ENCODE measurements at regions of chr10 and their contacts with region 1.

Region 1: GRCh38 chr10:63629363-63630084 is 108.3 kb downstream of the REEP3 start:
- DNase-seq: peak; percentile 89
- H3K4me3 Mint-ChIP-seq: peak overlapping the region; percentile 82
- H3K27ac Mint-ChIP-seq: peak overlapping the region; percentile 69
- H3K4me1 Mint-ChIP-seq: peaks cover 17% of the 10 kb centered on the region
- H3K27me3 Mint-ChIP-seq: no peaks in the 10 kb centered on the region

Region 2: GRCh38 chr10:62707810-62708209 is 921.7 kb before region 1 on chr10:
- CTCF ChIA-PET with region 1: no interaction called
- intact Hi-C with region 1: no loop called
- DNase-seq: no peak
- H3K4me3 Mint-ChIP-seq: no peak overlapping the region
- H3K27ac Mint-ChIP-seq: no peak overlapping the region
- H3K4me1 Mint-ChIP-seq: peaks cover 3% of the 10 kb centered on the region
- H3K27me3 Mint-ChIP-seq: peaks cover 2% of the 10 kb centered on the region

Region 3: GRCh38 chr10:63166742-63167258 is 462.7 kb before region 1 on chr10:
- CTCF ChIA-PET with region 1: interaction called, 77 read pairs
- intact Hi-C with region 1: loop called (anchors 1 kb)
- DNase-seq: peak; percentile 20
- H3K4me3 Mint-ChIP-seq: no peak overlapping the region
- H3K27ac Mint-ChIP-seq: no peak overlapping the region
- H3K4me1 Mint-ChIP-seq: peaks cover 30% of the 10 kb centered on the region
- H3K27me3 Mint-ChIP-seq: no peaks in the 10 kb centered on the region

Region 4: DNA sequence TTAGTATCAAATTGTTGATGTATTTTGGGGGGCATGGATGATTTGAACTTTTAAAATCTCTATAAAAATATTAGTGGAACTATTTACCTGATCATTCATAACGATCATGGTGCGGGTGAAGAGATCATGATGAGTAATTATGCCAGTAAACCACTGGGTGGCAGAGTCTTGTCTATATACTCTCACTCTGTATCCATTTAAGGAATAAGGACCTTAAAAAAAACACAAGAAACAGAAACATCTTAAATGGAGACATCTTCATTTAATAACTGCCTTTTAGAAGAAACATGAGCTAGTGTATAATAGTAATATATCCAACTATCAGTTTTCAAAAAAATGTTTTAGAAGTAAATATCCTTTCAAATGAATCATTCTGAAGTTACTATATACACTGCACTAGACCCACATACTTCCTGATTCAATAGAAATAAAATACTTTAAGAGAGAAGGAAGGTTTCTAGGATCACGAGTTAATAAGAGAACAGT is 412.4 kb before region 1 on chr10:
- CTCF ChIA-PET with region 1: interaction called, 24 read pairs
- intact Hi-C with region 1: loop called (anchors 1 kb)
- DNase-seq: no peak
- H3K4me3 Mint-ChIP-seq: no peak overlapping the region
- H3K27ac Mint-ChIP-seq: peak overlapping the region; percentile 13
- H3K4me1 Mint-ChIP-seq: peaks cover 49% of the 10 kb centered on the region
- H3K27me3 Mint-ChIP-seq: no peaks in the 10 kb centered on the region

Region 5: DNA sequence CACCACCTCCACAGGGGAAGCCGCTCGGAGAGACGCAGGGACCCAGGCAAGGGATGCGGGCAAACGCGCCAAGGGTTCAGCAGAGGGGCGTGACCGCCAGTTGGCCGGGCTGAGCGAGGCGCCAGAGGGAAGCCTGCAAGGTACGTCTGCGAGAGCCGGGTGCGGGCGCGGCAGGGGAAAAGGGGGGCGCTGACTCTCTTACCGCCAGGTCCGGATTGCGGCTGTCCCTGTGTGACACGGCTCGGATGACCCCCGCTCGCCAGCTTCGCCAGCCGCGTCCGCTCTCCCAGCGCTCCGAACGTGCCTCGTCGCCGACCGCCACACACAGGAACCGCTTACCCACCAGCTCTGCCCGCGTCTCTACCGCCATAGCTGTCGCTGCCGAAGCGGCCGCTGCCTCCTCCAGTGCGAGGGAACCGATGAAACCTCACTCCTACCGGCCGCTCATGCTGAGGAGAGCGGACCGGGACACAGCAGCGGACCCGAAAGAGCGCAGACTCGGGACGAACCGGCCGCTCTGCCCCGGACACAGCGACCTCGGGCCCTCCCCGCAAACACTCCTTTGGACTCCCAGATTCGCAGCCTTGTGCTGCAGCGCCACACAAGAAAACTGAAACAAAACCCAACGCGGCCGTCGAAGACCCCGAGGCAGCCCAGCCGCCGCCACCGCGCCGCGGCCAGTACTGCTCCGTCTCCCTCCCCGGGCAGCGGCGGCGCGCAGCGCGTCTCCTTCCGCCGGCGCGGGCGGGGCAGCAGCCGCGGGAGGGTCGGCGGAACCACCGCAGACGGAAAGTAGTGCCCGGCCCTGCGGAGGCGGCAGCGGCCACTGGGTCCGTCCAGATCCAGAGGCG is 164.0 kb before region 1 on chr10 and contains the start of gene JMJD1C:
- CTCF ChIA-PET with region 1: interaction called, 5 read pairs
- intact Hi-C with region 1: loop called (anchors 1 kb)
- DNase-seq: peak; percentile 69
- H3K4me3 Mint-ChIP-seq: peak within 1 kb of the TSS; percentile 92
- H3K27ac Mint-ChIP-seq: peak within 1 kb of the TSS; percentile 79
- H3K4me1 Mint-ChIP-seq: peaks cover 24% of the 10 kb centered on the region
- H3K27me3 Mint-ChIP-seq: no peaks in the 10 kb centered on the region
- total RNA-seq, gene JMJD1C: 54.1 to 56.6 TPM

Region 6: DNA sequence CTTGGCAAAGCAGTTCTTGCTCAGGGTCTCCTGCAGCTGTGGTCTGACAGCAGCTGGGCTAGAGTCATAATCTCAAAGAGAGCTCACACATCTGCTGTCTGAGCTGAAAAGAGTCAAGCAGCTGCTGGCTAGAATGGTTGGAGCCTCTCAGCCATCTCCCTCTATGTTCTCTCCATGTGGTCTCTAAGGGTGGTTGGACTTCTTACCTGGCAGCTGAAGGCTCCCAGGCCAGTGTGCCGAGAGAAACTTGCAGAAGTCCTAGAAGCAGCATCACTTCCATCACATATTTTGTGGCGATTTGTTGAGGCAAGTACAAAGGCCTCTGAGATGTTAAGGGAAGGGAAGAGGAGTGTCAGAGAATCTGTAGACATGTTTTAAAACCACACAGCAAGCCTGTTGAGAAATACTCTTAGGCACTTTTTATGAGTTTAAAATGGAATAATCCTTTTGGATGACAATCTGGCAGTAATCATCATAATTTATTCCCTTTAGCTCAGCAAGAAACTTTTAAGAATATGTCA is 15.1 kb before region 1 on chr10:
- CTCF ChIA-PET with region 1: interaction called, 11 read pairs
- intact Hi-C with region 1: loop called (anchors 1 kb)
- DNase-seq: no peak
- H3K4me3 Mint-ChIP-seq: no peak overlapping the region
- H3K27ac Mint-ChIP-seq: no peak overlapping the region
- H3K4me1 Mint-ChIP-seq: peaks cover 14% of the 10 kb centered on the region
- H3K27me3 Mint-ChIP-seq: no peaks in the 10 kb centered on the region

Region 7: DNA sequence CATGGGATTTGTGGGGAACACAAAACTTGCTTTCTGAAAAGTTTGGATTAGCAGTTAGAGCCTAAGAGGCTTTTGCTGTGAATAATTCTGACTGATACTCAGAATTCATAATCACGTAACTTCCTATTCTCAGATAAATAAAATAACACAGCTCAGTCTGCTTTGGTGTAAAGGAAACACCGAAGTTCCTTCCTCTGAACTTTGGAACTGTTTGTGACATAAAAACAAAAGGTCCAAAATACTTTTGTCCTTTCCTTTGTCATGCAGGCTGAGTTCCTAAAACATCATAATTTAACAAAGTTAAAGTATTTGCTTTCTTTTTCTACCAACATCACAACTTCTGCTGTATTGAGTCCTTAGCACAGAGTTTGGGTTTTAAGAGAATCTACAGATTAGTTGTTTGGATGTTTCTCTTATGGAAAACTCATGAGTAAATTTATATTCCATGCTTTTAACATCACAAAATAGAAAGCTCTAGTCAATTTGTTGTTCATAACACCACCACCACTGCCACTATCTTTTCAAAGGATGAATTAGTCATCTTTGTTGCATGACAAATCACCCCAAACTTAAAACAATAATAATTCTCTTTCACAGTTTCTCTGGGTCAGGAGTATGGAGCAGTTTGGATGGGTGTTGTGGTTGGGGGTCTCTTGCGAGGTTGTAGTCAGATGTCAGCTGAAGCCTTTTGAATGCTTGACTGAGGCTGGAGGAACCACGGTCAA is 15.1 kb after region 1 on chr10:
- CTCF ChIA-PET with region 1: no interaction called
- intact Hi-C with region 1: no loop called
- DNase-seq: no peak
- H3K4me3 Mint-ChIP-seq: no peak overlapping the region
- H3K27ac Mint-ChIP-seq: no peak overlapping the region
- H3K4me1 Mint-ChIP-seq: peaks cover 8% of the 10 kb centered on the region
- H3K27me3 Mint-ChIP-seq: no peaks in the 10 kb centered on the region

Region 8: GRCh38 chr10:63727636-63728035 is 98.1 kb after region 1 on chr10:
- CTCF ChIA-PET with region 1: interaction called, 11 read pairs
- intact Hi-C with region 1: no loop called
- DNase-seq: no peak
- H3K4me3 Mint-ChIP-seq: no peak overlapping the region
- H3K27ac Mint-ChIP-seq: no peak overlapping the region
- H3K4me1 Mint-ChIP-seq: no peaks in the 10 kb centered on the region
- H3K27me3 Mint-ChIP-seq: peaks cover 23% of the 10 kb centered on the region